Common myeloid progenitor, CD34-positive (primary cell): ENCODE measurements at regions of chr2 and their contacts with region 1.

Region 1: GRCh38 chr2:219002395-219003266 is 9.4 kb upstream of the CRYBA2 start:
- DNase-seq: peak; percentile 53 to 75 (median 74)
- H3K4me3 ChIP-seq: peak overlapping the region in 2 of 7 experiments; percentile 60 to 66
- H3K27ac ChIP-seq: no peak overlapping the region
- H3K4me1 ChIP-seq: peaks cover 0 to 23% (median 14%) of the 10 kb centered on the region in 4 experiments
- H3K27me3 ChIP-seq: peaks cover 0 to 98% (median 48%) of the 10 kb centered on the region in 5 experiments

Region 2: GRCh38 chr2:218466016-218466521 is 536.6 kb before region 1 on chr2:
- CTCF ChIA-PET with region 1: no interaction called
- POLR2A ChIA-PET with region 1: no interaction called
- DNase-seq: peak; percentile 18 to 37 (median 25)
- H3K4me3 ChIP-seq: no peak overlapping the region
- H3K27ac ChIP-seq: no peak overlapping the region
- H3K4me1 ChIP-seq: peaks cover 0 to 2% (median under 1%) of the 10 kb centered on the region in 4 experiments
- H3K27me3 ChIP-seq: no peaks in the 10 kb centered on the region

Region 3: DNA sequence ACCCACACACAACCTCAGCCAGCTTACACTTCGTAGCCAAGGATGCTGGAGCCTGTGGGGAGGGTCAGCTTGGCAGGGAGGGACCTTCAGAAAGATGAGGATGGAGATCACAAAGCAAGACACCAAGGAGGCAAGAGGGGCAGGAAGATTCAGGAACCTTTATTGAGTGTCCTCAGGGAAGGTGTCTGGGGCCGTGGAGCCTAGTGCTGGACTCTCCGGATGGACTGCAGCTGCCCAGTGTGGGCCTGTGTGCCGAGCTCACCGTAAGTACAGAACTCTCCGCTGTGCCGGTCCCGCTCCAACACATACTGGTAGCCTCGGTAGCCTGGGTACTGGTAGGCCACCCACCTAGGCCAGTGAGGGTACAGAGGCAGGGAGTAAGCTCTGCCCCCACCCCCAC is 12.6 kb before region 1 on chr2:
- CTCF ChIA-PET with region 1: interaction called, 15 read pairs
- POLR2A ChIA-PET with region 1: no interaction called
- DNase-seq: no peak
- H3K4me3 ChIP-seq: no peak overlapping the region
- H3K27ac ChIP-seq: no peak overlapping the region
- H3K4me1 ChIP-seq: peaks cover 0 to 23% (median 15%) of the 10 kb centered on the region in 4 experiments
- H3K27me3 ChIP-seq: peaks cover 4 to 100% (median 60%) of the 10 kb centered on the region in 5 experiments

Region 4: DNA sequence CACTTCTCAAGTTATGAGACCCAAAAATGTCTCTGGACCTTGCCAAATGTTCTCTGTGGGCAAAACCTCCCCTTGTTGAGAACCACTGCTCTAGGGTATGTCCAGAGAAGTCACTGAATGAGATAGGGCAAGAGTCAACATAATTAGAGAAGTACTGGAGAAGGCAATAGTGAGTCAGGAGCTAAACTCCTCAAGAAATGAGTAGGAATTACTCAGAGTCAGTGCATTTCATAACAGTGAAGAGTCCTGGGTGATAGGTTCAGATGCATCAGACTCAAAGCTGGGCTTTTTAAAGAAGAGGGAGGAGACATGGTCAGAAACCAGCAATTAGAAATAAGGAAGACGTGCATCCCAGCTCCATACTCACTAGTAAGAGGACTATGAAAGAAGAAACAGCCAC is 96.7 kb after region 1 on chr2:
- CTCF ChIA-PET with region 1: no interaction called
- POLR2A ChIA-PET with region 1: no interaction called
- DNase-seq: no peak
- H3K4me3 ChIP-seq: no peak overlapping the region
- H3K27ac ChIP-seq: no peak overlapping the region
- H3K4me1 ChIP-seq: peaks cover 0 to 6% (median 4%) of the 10 kb centered on the region in 4 experiments
- H3K27me3 ChIP-seq: no peaks in the 10 kb centered on the region